ENCODE measurements at regions of chr10 and their contacts with region 1.

Region 1: DNA sequence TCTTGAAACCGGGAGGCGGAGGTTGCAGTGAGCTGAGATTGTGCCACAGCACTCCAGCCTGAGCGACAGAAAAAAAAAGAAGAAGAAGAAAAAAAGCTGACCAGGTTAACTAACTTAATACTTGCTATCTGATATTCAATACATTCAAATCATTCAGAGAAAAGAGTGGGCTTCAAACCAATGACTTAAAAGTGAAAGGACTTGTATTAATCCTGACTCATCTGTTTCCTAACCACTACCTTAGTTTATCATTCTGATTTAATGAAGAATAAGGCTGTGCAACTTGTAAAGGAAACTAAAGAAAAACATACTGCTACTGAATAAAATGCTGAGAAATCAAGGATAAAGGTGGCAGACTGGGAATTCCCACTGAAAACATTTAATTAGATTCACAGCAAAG is 128.4 kb downstream of the NRBF2 start:
- DNase-seq: no peak
- ATAC-seq: peak; percentile 46
- H3K4me3 ChIP-seq: peak overlapping the region; percentile 35; the same call in 1 of the 2 replicates
- H3K27ac ChIP-seq: peak overlapping the region; percentile 81
- H3K4me1 ChIP-seq: peaks cover 32% of the 10 kb centered on the region
- H3K27me3 ChIP-seq: no peaks in the 10 kb centered on the region
- CTCF ChIP-seq: no peak
- EP300 ChIP-seq: 0 out of 4 replicates have a peak, but pooled peaks of 1 of the 2 experiments have one; percentile 24
- POLR2A ChIP-seq: no peak
- RAD21 ChIP-seq: no peak

Region 2: GRCh38 chr10:63083904-63084689 is 177.4 kb before region 1 on chr10:
- CTCF ChIA-PET with region 1: no interaction called
- POLR2A ChIA-PET with region 1: no interaction called
- RAD21 ChIA-PET with region 1: no interaction called
- SMC1A ChIA-PET with region 1: no interaction called
- in situ Hi-C with region 1: no loop called
- intact Hi-C with region 1: no loop called
- DNase-seq: peak; percentile 38
- ATAC-seq: peak; percentile 94
- H3K4me3 ChIP-seq: no peak overlapping the region
- H3K27ac ChIP-seq: no peak overlapping the region
- H3K4me1 ChIP-seq: no peaks in the 10 kb centered on the region
- H3K27me3 ChIP-seq: no peaks in the 10 kb centered on the region; a peak in 1 of 4 replicates
- CTCF ChIP-seq: peak; percentile 63 to 84 (median 76)
- EP300 ChIP-seq: no peak
- POLR2A ChIP-seq: no peak
- RAD21 ChIP-seq: peak; percentile 99

Region 3: DNA sequence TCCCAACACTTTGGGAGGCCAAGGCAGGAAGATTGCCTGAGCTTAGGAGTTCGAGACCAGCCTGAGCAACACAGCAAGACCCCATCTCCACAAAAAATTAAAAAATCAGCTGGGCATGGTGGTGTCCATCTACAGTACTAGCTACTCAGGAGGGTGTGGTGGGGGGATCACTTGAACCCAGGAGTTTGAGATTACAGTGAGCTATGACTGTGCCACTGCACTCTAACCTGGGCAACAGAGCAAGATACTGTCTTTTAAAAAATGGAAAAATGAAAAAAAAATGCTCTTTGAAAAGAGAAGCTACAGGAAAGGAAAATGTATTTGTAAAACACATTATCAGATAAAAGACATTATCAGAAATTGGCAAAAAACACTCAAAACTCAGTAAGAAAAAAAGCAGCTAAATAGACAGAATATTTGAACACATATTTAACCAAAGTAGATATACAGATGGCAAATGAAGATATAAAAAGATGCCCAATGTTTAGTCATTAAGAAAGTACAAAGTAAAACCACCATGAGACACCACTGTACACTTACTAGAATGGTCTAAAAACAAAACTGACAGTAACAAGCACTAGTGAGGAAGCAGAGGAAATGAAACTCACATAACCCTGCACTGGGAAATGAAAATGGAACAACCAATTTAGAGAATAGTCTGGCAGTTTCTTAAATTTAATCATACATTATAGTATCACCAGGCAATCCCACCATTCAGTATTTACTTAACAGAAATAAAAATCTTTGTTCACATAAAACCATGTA is 87.8 kb before region 1 on chr10:
- CTCF ChIA-PET with region 1: interaction called, 3 read pairs
- POLR2A ChIA-PET with region 1: no interaction called
- RAD21 ChIA-PET with region 1: no interaction called
- SMC1A ChIA-PET with region 1: interaction called, 6 read pairs
- in situ Hi-C with region 1: no loop called
- intact Hi-C with region 1: loop called (anchors 2 kb)
- DNase-seq: peak; percentile 77
- ATAC-seq: peak; percentile 99
- H3K4me3 ChIP-seq: no peak overlapping the region
- H3K27ac ChIP-seq: peak overlapping the region; percentile 55
- H3K4me1 ChIP-seq: peaks cover 18% of the 10 kb centered on the region
- H3K27me3 ChIP-seq: no peaks in the 10 kb centered on the region
- CTCF ChIP-seq: no peak
- EP300 ChIP-seq: peak; percentile 32 to 86; a peak in 2 of 4 replicates
- POLR2A ChIP-seq: no peak
- RAD21 ChIP-seq: no peak

Region 4: GRCh38 chr10:63217120-63217605 is 44.3 kb before region 1 on chr10:
- CTCF ChIA-PET with region 1: interaction called, 27 read pairs
- POLR2A ChIA-PET with region 1: interaction called, 4 read pairs
- RAD21 ChIA-PET with region 1: interaction called, 24 read pairs
- SMC1A ChIA-PET with region 1: interaction called, 46 read pairs
- in situ Hi-C with region 1: no loop called
- intact Hi-C with region 1: no loop called
- DNase-seq: no peak
- ATAC-seq: peak; percentile 86
- H3K4me3 ChIP-seq: no peak overlapping the region
- H3K27ac ChIP-seq: peak overlapping the region; percentile 39; the same call in 1 of the 2 replicates
- H3K4me1 ChIP-seq: peaks cover 5% of the 10 kb centered on the region; the same call in 1 of the 2 replicates
- H3K27me3 ChIP-seq: no peaks in the 10 kb centered on the region
- CTCF ChIP-seq: peak; percentile 43 to 67 (median 47); a peak in 5 of 6 replicates
- EP300 ChIP-seq: no peak
- POLR2A ChIP-seq: no peak
- RAD21 ChIP-seq: peak; percentile 76

Region 5: DNA sequence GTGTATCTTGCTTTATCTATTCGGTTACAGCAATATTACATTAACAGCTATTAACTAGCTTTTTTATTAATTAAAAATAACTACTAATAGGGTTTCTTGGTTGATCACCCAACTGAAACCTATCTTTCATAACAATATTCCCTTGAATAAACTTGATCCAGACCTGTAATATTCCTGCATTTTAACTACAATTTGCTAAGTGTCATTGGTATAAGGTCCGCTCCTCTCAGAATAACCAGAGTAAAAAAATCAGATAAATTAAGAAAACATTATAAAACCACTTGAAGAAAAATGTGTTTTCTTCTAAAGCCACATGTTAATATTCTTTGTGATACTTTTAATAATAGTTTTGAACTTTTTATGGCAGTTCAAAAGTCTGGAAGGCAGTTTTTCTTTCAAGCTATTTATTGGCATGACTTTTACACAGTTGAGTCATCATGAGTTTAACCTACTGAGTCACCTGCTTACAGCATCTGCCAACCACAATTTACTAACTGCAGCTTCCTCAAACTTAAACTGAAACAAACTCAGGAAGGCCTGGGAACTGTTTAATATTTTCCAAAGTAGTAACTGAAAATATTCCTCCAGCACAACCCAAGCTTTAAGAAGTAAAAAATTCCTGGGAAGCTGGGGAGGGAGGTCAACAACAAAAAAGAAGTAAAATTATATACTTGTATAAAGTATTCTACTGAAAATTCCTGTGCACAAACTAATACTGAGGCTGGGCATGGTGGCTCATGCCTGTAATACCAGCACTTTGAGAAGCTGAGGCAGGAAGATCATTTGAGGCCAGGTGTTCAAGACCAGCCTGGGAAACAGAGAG is 25.2 kb before region 1 on chr10:
- CTCF ChIA-PET with region 1: interaction called, 7 read pairs
- POLR2A ChIA-PET with region 1: interaction called, 12 read pairs
- RAD21 ChIA-PET with region 1: interaction called, 26 read pairs
- SMC1A ChIA-PET with region 1: interaction called, 47 read pairs
- in situ Hi-C with region 1: no loop called
- intact Hi-C with region 1: no loop called
- DNase-seq: no peak
- ATAC-seq: peak; percentile 87
- H3K4me3 ChIP-seq: no peak overlapping the region
- H3K27ac ChIP-seq: peak overlapping the region; percentile 56
- H3K4me1 ChIP-seq: peaks cover 5% of the 10 kb centered on the region; the same call in 1 of the 2 replicates
- H3K27me3 ChIP-seq: no peaks in the 10 kb centered on the region
- CTCF ChIP-seq: no peak
- EP300 ChIP-seq: peak; percentile 54 to 70; a peak in 3 of 4 replicates
- POLR2A ChIP-seq: no peak
- RAD21 ChIP-seq: no peak

Region 6: GRCh38 chr10:63286754-63287264 is 25.3 kb after region 1 on chr10:
- CTCF ChIA-PET with region 1: interaction called, 19 read pairs
- POLR2A ChIA-PET with region 1: interaction called, 4 read pairs
- RAD21 ChIA-PET with region 1: interaction called, 21 read pairs
- SMC1A ChIA-PET with region 1: interaction called, 44 read pairs
- in situ Hi-C with region 1: no loop called
- intact Hi-C with region 1: no loop called
- DNase-seq: peak; percentile 66
- ATAC-seq: peak; percentile 83
- H3K4me3 ChIP-seq: peak overlapping the region; percentile 19; the same call in 1 of the 2 replicates
- H3K27ac ChIP-seq: peak overlapping the region; percentile 73
- H3K4me1 ChIP-seq: peaks cover 32% of the 10 kb centered on the region
- H3K27me3 ChIP-seq: no peaks in the 10 kb centered on the region
- CTCF ChIP-seq: no peak
- EP300 ChIP-seq: peak; percentile 24 to 69; a peak in 1 of 4 replicates
- POLR2A ChIP-seq: no peak
- RAD21 ChIP-seq: no peak

Measured in GM12878 (cell line).